Common myeloid progenitor, CD34-positive (primary cell): ENCODE measurements at regions of chr9 and their contacts with region 1.

Region 1: GRCh38 chr9:71819115-71819739 is 50.9 kb upstream of the CEMIP2 start:
- DNase-seq: peak; percentile 37 to 66 (median 59)
- H3K4me3 ChIP-seq: no peak overlapping the region
- H3K27ac ChIP-seq: no peak overlapping the region
- H3K4me1 ChIP-seq: peaks cover 18 to 28% (median 21%) of the 10 kb centered on the region in 4 experiments
- H3K27me3 ChIP-seq: no peaks in the 10 kb centered on the region

Region 2: DNA sequence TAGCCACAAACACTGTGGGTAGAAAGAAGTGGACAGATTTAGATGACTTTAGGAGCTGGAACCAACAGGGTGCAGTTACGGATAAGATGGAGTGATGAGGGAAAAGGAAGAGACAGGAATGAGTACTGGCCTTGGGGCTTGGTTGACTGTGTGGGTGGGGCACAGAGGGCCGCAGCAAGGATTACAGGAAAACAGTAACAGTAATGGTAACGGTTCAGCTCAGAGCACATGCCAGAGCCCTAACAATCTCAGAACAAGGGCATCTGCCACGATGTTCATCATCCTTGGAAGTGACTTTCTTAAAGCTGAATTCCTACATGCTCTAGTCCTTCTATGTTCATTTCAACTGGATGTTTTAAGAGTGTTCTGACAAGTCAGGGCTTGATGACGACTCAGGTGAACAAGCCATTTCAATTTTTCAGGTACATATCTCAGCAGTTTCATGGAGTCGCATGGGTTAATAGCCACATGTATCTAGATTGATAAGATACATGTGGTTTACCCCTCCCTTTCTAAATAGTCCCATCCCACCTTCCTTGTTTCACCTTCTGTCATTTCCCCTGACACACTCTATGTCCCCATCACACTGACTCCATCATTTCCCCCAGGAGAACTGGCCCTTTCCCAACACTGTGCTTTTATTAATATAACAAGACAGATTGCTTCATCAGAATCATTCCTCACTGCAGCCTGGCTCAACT is 115.9 kb before region 1 on chr9:
- CTCF ChIA-PET with region 1: no interaction called
- POLR2A ChIA-PET with region 1: no interaction called
- DNase-seq: no peak
- H3K4me3 ChIP-seq: no peak overlapping the region
- H3K27ac ChIP-seq: no peak overlapping the region
- H3K4me1 ChIP-seq: peaks cover 0 to 2% (median 0%) of the 10 kb centered on the region in 4 experiments
- H3K27me3 ChIP-seq: no peaks in the 10 kb centered on the region

Region 3: DNA sequence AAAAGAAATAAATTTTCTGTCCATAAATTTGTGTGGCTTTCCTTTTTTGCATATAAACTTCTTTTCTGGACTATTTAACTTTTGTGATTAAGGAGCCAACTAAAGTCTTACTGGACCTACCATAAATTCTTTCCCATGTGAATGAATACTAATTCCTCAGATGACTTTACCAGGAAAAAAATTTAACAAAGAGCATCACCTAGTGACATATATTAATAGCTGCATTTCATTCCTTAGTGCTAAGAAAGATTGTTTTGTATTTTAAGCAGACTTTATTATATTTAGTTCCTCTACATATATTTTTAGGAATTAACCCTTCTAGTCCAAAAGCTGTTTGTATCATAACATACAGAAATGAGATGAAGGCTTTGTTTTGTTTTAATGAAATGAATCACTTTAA is 156.6 kb after region 1 on chr9:
- CTCF ChIA-PET with region 1: interaction called, 12 read pairs
- POLR2A ChIA-PET with region 1: no interaction called
- DNase-seq: peak in 2 of 3 donors; percentile 14 to 21
- H3K4me3 ChIP-seq: no peak overlapping the region
- H3K27ac ChIP-seq: no peak overlapping the region
- H3K4me1 ChIP-seq: peaks cover 0 to 7% (median 3%) of the 10 kb centered on the region in 4 experiments
- H3K27me3 ChIP-seq: no peaks in the 10 kb centered on the region